Mammary epithelial cell (primary cell): ENCODE measurements at regions of chr12 and their contacts with region 1.

Region 1: GRCh38 chr12:100566887-100567637 is 6.4 kb upstream of the GAS2L3 start:
- DNase-seq: peak; percentile 12
- H3K4me3 ChIP-seq: no peak overlapping the region
- H3K27ac ChIP-seq: no peak overlapping the region
- H3K4me1 ChIP-seq: peaks cover 9% of the 10 kb centered on the region
- H3K27me3 ChIP-seq: no peaks in the 10 kb centered on the region
- CTCF ChIP-seq: no peak

Region 2: DNA sequence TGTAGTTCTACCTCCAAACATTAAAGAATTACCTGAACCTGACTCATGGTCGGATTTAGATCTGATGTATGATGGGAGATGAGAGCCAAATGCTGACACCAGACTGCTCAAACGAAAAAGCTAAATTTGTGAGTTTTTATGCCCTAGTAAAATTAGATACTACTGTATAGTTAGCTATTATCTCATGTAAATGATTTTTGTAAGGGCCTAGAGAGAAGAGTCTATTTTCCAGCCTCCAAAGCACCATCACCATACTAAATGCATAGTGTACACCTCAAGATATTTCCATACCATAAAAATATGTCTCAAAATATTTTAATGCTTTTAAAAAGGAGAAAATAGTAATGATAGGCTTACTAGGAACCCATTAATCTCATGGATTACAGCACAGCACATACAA is 600.6 kb before region 1 on chr12:
- CTCF ChIA-PET with region 1: no interaction called
- dilution Hi-C with region 1: no loop called
- in situ Hi-C with region 1: no loop called
- intact Hi-C with region 1: no loop called
- DNase-seq: no peak
- H3K4me3 ChIP-seq: no peak overlapping the region
- H3K27ac ChIP-seq: no peak overlapping the region
- H3K4me1 ChIP-seq: no peaks in the 10 kb centered on the region
- H3K27me3 ChIP-seq: peaks cover 1% of the 10 kb centered on the region
- CTCF ChIP-seq: no peak

Region 3: GRCh38 chr12:101051901-101052550 is 485.0 kb after region 1 on chr12:
- CTCF ChIA-PET with region 1: no interaction called
- dilution Hi-C with region 1: loop called (anchors 10 kb)
- in situ Hi-C with region 1: no loop called
- intact Hi-C with region 1: no loop called
- DNase-seq: peak; percentile 60
- H3K4me3 ChIP-seq: no peak overlapping the region
- H3K27ac ChIP-seq: peak overlapping the region; percentile 17
- H3K4me1 ChIP-seq: peaks cover 11% of the 10 kb centered on the region
- H3K27me3 ChIP-seq: no peaks in the 10 kb centered on the region
- CTCF ChIP-seq: no peak